ENCODE measurements at regions of chr15 and their contacts with region 1.

Region 1: DNA sequence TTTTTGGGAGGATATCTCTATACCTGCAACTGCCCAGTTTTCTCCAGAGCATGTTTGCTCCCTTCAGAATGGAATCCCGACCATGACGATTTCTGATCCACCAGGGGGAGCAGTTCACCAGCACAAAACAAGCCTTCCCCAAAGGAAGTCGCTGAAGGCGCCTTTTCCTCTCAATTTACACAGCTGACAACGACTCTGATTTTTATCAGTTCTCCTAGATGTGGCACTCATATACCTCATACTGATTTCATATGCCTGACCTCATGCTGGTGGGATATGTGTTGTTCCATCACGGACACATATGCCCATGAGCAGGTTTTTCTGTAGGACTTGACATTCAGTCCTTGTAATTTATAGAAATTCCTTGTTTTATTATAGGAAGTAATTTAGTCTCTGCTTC is 1028.2 kb downstream of the MCTP2 start:
- DNase-seq: peak; percentile 87
- H3K4me3 ChIP-seq: no peak overlapping the region
- H3K27ac ChIP-seq: peak overlapping the region in 3 of 4 donors; percentile 7 to 29 (median 25)
- H3K4me1 ChIP-seq: peaks cover 0 to 30% (median 17%) of the 10 kb centered on the region in 4 donors
- H3K27me3 ChIP-seq: no peaks in the 10 kb centered on the region
- CTCF ChIP-seq: peak; percentile 41 to 80 (median 70)
- EP300 ChIP-seq: no peak
- POLR2A ChIP-seq: no peak

Region 2: DNA sequence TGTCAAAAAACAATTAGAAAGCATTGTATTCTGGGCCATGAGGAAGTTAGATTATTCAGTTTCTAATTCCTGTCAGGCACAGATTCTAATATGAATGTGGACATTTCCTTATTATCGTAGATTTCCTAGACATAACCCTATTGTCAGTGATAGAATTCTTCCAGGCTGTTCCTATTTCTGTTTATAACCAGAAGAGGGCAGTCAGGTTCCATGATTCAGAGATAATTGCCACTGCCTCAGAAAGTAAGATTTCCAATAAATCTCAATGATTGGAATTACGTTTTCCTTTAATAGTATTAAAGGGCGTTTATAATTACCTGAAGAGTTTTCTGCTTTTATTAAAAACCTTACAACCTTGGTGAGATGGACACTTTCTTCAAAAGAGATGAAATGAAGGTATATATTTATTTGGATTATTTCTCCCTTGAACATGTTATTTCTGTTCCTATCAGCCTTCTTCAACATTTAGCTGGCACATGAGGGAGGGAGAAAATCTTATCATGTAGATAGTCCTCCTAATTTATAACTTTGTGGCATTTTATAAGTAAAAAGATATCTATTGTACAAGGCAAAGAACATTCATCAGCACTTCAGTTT is 589.0 kb before region 1 on chr15:
- intact Hi-C with region 1: loop called (anchors 10 kb)
- DNase-seq: no peak
- H3K4me3 ChIP-seq: no peak overlapping the region
- H3K27ac ChIP-seq: peak overlapping the region in 2 of 4 donors; percentile 14 to 51
- H3K4me1 ChIP-seq: peaks cover 0 to 22% (median 14%) of the 10 kb centered on the region in 4 donors
- H3K27me3 ChIP-seq: no peaks in the 10 kb centered on the region
- CTCF ChIP-seq: peak; percentile 47 to 64 (median 55)
- EP300 ChIP-seq: no peak
- POLR2A ChIP-seq: no peak

Region 3: DNA sequence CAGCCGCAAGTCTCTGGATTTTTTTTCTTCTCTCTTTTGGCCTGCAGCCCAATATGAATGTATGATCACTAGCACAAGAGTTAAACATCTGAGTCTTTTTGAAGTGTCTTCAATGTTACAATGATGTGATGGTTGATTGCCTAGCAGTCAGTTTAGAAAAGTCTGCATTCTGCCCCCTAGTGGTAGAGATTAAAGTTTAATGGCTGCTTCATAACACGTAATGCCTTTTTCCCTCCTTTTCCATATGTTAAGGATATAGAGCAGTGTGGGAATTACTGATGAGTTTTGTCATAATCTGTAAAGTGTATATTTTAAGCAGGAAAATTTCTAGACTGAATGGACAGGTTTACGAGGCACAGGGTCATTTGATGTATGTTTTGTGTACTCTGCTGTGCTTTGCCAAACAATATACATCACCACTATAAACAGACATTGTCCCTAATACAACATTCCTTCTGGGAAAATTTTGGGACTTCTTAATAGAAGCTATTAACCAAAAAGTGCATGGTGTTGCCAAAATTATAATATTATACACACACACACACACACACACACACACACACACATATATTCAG is 32.5 kb after region 1 on chr15:
- intact Hi-C with region 1: loop called (anchors 2 kb)
- DNase-seq: no peak
- H3K4me3 ChIP-seq: no peak overlapping the region
- H3K27ac ChIP-seq: no peak overlapping the region
- H3K4me1 ChIP-seq: peaks cover 0 to 18% (median 15%) of the 10 kb centered on the region in 4 donors
- H3K27me3 ChIP-seq: no peaks in the 10 kb centered on the region
- CTCF ChIP-seq: peak in 3 of 4 experiments; percentile 42 to 65 (median 62)
- EP300 ChIP-seq: no peak
- POLR2A ChIP-seq: no peak

Region 4: DNA sequence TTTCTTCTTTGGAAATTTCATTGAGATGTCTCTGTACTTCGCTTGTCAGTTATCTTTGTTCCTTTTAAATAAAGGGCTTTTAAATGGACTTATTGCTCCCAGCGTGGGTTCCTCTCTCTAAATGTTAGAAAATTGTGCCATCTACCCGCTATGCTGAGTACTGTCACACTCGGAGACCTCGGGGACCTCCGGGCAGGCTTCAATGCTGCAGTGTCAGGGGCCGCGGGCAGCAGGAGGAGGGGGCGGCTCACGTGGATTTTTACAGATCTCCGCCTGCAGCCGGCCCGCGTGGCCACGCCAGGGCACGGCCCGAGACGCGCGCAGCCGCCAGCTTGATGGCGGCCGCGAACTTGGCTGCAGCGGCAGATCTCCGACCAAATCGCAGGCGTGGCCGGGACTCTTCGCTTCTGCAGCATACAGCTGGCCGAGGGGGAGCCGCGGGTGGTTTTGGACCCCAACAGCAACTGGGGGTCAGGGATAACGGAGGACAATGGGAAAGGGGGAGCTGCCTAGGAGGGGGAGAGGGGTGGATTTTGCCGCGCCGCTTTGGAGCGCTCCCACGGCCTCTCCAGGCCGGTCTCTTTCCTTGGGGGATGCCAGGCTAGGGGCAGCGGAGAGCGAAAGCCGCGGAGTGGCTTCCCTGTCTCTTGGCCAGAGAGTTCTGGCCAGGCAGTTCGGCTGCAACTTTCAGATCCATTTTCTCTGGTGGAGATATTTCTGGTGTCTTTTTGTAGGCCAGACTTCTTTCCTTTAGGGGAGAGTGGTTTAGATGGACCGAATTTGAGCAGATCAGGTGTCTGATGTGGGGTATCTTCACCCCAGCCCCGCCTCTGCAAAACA is 1086.3 kb after region 1 on chr15:
- intact Hi-C with region 1: loop called (anchors 5 kb)
- DNase-seq: peak; percentile 89
- H3K4me3 ChIP-seq: peak overlapping the region; percentile 36 to 56 (median 51)
- H3K27ac ChIP-seq: peak overlapping the region; percentile 92 to 97 (median 94)
- H3K4me1 ChIP-seq: peaks cover 0 to 75% (median 60%) of the 10 kb centered on the region in 4 donors
- H3K27me3 ChIP-seq: no peaks in the 10 kb centered on the region
- CTCF ChIP-seq: peak; percentile 41 to 59 (median 50)
- EP300 ChIP-seq: no peak
- POLR2A ChIP-seq: no peak

Region 5: GRCh38 chr15:97234851-97235610 is 1975.5 kb after region 1 on chr15:
- intact Hi-C with region 1: loop called (anchors 10 kb)
- DNase-seq: no peak
- H3K4me3 ChIP-seq: no peak overlapping the region
- H3K27ac ChIP-seq: no peak overlapping the region
- H3K4me1 ChIP-seq: peaks cover 0 to 8% (median 0%) of the 10 kb centered on the region in 4 donors
- H3K27me3 ChIP-seq: no peaks in the 10 kb centered on the region
- CTCF ChIP-seq: peak; percentile 49 to 91 (median 76)
- EP300 ChIP-seq: no peak
- POLR2A ChIP-seq: no peak

Measured in sigmoid colon (tissue), 7 donors.